PC-3 (cell line): ENCODE measurements at regions of chr2 and their contacts with region 1.

Region 1: GRCh38 chr2:236180831-236181453 is 12.8 kb upstream of the GBX2 start:
- DNase-seq: peak; percentile 79
- ATAC-seq: peak; percentile 43
- H3K4me3 ChIP-seq: peak overlapping the region; percentile 80; the same call in 1 of the 2 replicates
- H3K27ac ChIP-seq: no peak overlapping the region; the same call in 1 of the 2 replicates
- H3K4me1 ChIP-seq: peaks cover 11% of the 10 kb centered on the region
- H3K27me3 ChIP-seq: no peaks in the 10 kb centered on the region
- CTCF ChIP-seq: peak; percentile 87

Region 2: GRCh38 chr2:235766278-235766677 is 414.7 kb before region 1 on chr2:
- CTCF ChIA-PET with region 1: interaction called, 6 read pairs
- POLR2A ChIA-PET with region 1: no interaction called
- intact Hi-C with region 1: loop called (anchors 1 kb)
- DNase-seq: peak; percentile 92
- ATAC-seq: peak; percentile 94
- H3K4me3 ChIP-seq: no peak overlapping the region
- H3K27ac ChIP-seq: peak overlapping the region; percentile 59
- H3K4me1 ChIP-seq: peaks cover 10% of the 10 kb centered on the region; the same call in 1 of the 2 replicates
- H3K27me3 ChIP-seq: no peaks in the 10 kb centered on the region
- CTCF ChIP-seq: peak; percentile 90

Region 3: DNA sequence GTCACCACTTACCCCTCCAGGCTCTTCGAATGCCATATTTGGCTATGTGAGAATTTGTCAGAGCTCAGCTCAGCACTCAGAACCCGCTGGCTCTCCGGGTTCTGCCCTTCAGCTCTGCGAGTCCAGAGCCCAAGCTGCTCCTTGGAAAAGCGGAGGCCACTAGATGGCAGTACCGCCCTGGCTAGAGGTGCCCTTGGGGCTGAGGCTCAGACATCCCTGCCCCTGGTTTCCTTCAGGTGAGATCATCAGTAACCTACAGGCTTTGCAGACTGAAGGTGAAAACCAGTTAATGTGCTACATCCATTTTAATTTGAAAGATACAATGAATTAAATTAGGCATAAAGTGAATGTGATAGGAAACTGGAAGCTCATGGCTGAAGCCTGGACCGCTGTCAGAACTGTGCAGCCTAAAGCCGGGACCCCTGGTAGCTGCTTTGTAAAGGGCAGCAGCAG is 401.5 kb before region 1 on chr2:
- CTCF ChIA-PET with region 1: interaction called, 7 read pairs
- POLR2A ChIA-PET with region 1: no interaction called
- intact Hi-C with region 1: loop called (anchors 1 kb)
- DNase-seq: peak; percentile 85
- ATAC-seq: peak; percentile 98
- H3K4me3 ChIP-seq: no peak overlapping the region
- H3K27ac ChIP-seq: no peak overlapping the region
- H3K4me1 ChIP-seq: no peaks in the 10 kb centered on the region
- H3K27me3 ChIP-seq: no peaks in the 10 kb centered on the region
- CTCF ChIP-seq: peak; percentile 92

Region 4: GRCh38 chr2:235802538-235803427 is 378.2 kb before region 1 on chr2:
- CTCF ChIA-PET with region 1: no interaction called
- POLR2A ChIA-PET with region 1: no interaction called
- intact Hi-C with region 1: loop called (anchors 2 kb)
- DNase-seq: no peak
- ATAC-seq: no peak
- H3K4me3 ChIP-seq: no peak overlapping the region
- H3K27ac ChIP-seq: no peak overlapping the region
- H3K4me1 ChIP-seq: no peaks in the 10 kb centered on the region
- H3K27me3 ChIP-seq: no peaks in the 10 kb centered on the region
- CTCF ChIP-seq: peak; percentile 37

Region 5: GRCh38 chr2:235864733-235865515 is 316.0 kb before region 1 on chr2:
- CTCF ChIA-PET with region 1: no interaction called
- POLR2A ChIA-PET with region 1: no interaction called
- intact Hi-C with region 1: no loop called
- DNase-seq: no peak
- ATAC-seq: no peak
- H3K4me3 ChIP-seq: no peak overlapping the region
- H3K27ac ChIP-seq: no peak overlapping the region
- H3K4me1 ChIP-seq: no peaks in the 10 kb centered on the region
- H3K27me3 ChIP-seq: no peaks in the 10 kb centered on the region
- CTCF ChIP-seq: no peak